A673 (cell line): ENCODE measurements at regions of chr5 and their contacts with region 1.

Region 1: GRCh38 chr5:79567921-79568549 is 44.2 kb upstream of the TENT2 start:
- DNase-seq: peak; percentile 65
- H3K4me3 ChIP-seq: no peak overlapping the region
- H3K27ac ChIP-seq: peak overlapping the region; percentile 49
- H3K4me1 ChIP-seq: peaks cover 17% of the 10 kb centered on the region
- H3K27me3 ChIP-seq: peaks cover 62% of the 10 kb centered on the region
- CTCF ChIP-seq: no peak

Region 2: GRCh38 chr5:78953092-78953800 is 614.8 kb before region 1 on chr5:
- CTCF ChIA-PET with region 1: no interaction called
- POLR2A ChIA-PET with region 1: interaction called, 10 read pairs
- intact Hi-C with region 1: no loop called
- DNase-seq: no peak
- H3K4me3 ChIP-seq: no peak overlapping the region
- H3K27ac ChIP-seq: no peak overlapping the region
- H3K4me1 ChIP-seq: peaks cover 31% of the 10 kb centered on the region
- H3K27me3 ChIP-seq: no peaks in the 10 kb centered on the region
- CTCF ChIP-seq: no peak

Region 3: DNA sequence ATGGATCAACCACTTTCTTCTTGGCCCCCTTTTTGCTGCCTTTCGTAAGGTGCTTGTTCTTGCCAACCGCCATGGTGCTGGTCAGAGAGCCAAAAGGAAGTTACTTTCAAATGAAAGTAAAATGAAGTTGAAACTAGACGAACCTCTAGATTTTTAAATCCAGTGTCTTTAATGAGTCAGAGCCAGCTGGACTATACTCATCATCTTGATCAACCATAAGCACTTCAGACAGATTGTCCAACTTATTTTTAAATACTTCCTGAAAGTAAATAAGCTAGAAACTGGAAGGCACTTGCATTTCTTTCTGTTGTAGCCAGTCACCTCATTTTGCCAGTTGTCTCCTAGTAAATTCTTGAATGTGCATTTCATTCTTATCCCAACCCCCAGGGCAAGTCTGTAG is 283.2 kb before region 1 on chr5:
- CTCF ChIA-PET with region 1: no interaction called
- POLR2A ChIA-PET with region 1: no interaction called
- intact Hi-C with region 1: no loop called
- DNase-seq: no peak
- H3K4me3 ChIP-seq: no peak overlapping the region
- H3K27ac ChIP-seq: no peak overlapping the region
- H3K4me1 ChIP-seq: no peaks in the 10 kb centered on the region
- H3K27me3 ChIP-seq: no peaks in the 10 kb centered on the region
- CTCF ChIP-seq: no peak

Region 4: GRCh38 chr5:79456890-79457583 is 111.0 kb before region 1 on chr5:
- CTCF ChIA-PET with region 1: interaction called, 10 read pairs
- POLR2A ChIA-PET with region 1: no interaction called
- intact Hi-C with region 1: no loop called
- DNase-seq: no peak
- H3K4me3 ChIP-seq: no peak overlapping the region
- H3K27ac ChIP-seq: no peak overlapping the region
- H3K4me1 ChIP-seq: peaks cover 16% of the 10 kb centered on the region
- H3K27me3 ChIP-seq: no peaks in the 10 kb centered on the region
- CTCF ChIP-seq: no peak

Region 5: DNA sequence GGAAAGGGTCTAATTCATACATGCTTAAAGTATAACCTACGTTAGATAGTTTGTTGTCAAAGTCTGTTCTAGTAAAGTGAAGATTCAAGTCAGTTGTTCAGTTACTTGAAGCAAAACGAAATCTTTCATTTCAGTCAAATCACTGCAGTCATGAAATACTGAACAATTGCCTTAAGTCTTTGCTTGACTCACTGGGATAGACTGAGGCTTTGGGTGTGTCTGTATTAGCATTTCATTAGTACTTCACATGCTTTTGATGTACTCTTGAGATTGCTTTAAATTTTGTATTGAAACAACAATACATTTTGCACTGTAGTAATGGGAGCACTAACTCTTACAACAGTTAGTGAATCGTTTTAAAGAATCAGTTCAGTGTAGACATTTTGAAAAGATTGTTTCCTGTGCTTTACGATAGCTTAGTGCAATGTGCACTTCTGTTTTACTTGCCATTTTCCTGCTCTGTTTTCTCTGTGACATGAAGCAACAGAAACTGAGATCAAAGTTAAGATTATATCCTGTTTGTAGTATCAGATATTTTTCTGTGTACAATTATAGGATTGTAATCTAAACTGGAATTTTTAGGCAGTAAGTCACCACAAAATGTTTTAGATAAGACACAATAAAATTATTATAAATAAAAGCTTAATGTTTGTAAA is 117.7 kb after region 1 on chr5:
- CTCF ChIA-PET with region 1: no interaction called
- POLR2A ChIA-PET with region 1: no interaction called
- intact Hi-C with region 1: no loop called
- DNase-seq: no peak
- H3K4me3 ChIP-seq: no peak overlapping the region
- H3K27ac ChIP-seq: no peak overlapping the region
- H3K4me1 ChIP-seq: peaks cover 4% of the 10 kb centered on the region
- H3K27me3 ChIP-seq: no peaks in the 10 kb centered on the region
- CTCF ChIP-seq: no peak

Region 6: DNA sequence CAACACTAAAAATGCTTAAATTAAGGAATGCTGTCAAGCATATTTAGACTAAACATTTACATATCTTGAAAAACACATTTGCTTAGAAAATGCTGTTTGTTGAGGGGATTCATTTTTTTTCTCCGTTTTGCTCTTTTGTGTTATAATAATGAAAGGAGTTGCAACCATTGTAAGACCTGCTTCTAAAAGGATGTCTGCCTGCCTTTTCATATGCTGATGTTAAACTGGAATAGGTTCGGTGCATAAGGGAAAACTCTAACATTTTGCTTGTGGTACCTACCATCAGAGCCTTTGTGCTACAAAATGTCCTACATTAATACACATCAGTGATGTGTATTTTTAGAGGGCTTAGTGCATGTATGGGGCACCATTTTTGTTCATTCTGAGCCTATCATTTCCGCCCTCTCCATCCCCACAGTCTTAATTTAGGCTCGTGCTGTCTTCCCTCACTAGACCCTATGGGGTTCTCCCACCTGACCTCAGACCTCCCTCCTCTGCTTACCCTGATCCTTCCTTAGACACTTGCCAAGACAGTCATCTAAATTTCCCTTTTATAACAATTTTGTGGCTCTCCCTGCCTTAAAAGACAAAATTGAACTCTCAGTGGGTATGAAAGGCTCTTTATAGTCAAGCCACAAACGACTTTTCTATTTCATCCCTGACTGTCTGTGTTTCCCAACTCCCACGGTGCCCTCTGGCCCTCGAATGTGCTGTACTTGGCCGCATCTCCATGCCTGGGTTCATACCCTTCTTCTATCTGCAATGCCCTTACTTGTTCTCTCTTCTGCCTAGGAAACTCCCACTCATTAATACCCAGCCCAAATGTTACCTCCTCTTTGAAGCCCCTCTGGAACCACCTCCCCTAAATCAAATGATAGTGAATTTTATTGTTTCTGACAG is 182.8 kb after region 1 on chr5:
- CTCF ChIA-PET with region 1: no interaction called
- POLR2A ChIA-PET with region 1: no interaction called
- intact Hi-C with region 1: no loop called
- DNase-seq: no peak
- H3K4me3 ChIP-seq: no peak overlapping the region
- H3K27ac ChIP-seq: no peak overlapping the region
- H3K4me1 ChIP-seq: no peaks in the 10 kb centered on the region
- H3K27me3 ChIP-seq: no peaks in the 10 kb centered on the region
- CTCF ChIP-seq: no peak

Region 7: DNA sequence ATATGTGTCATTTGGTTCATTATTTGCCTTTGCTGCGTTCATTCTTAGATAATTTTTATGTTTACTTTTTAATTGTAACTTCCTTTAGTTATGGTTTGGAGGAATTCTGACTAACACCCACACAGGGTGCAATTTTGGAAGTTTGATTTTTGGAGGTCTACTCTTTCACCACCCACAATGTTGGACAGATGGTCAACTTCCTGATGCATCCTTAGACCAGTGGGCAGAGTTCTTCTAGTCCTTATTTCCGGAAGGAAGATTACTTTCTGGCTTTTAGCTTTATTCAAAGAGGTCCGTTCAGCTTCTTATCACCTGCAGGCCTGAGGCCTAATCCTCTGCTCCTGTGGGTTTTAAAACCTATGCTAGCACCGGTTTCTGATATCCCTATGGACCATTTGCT is 296.3 kb after region 1 on chr5:
- CTCF ChIA-PET with region 1: no interaction called
- POLR2A ChIA-PET with region 1: interaction called, 13 read pairs
- intact Hi-C with region 1: no loop called
- DNase-seq: no peak
- H3K4me3 ChIP-seq: no peak overlapping the region
- H3K27ac ChIP-seq: no peak overlapping the region
- H3K4me1 ChIP-seq: no peaks in the 10 kb centered on the region
- H3K27me3 ChIP-seq: peaks cover 20% of the 10 kb centered on the region
- CTCF ChIP-seq: no peak